ENCODE measurements at regions of chr10 and their contacts with region 1.

Region 1: GRCh38 chr10:119041326-119041725 is 11.8 kb downstream of the NANOS1 start:
- DNase-seq: no peak
- H3K4me3 ChIP-seq: no peak overlapping the region
- H3K27ac ChIP-seq: no peak overlapping the region
- H3K4me1 ChIP-seq: no peaks in the 10 kb centered on the region
- H3K27me3 ChIP-seq: no peaks in the 10 kb centered on the region
- CTCF ChIP-seq: no peak
- POLR2A ChIP-seq: no peak

Region 2: DNA sequence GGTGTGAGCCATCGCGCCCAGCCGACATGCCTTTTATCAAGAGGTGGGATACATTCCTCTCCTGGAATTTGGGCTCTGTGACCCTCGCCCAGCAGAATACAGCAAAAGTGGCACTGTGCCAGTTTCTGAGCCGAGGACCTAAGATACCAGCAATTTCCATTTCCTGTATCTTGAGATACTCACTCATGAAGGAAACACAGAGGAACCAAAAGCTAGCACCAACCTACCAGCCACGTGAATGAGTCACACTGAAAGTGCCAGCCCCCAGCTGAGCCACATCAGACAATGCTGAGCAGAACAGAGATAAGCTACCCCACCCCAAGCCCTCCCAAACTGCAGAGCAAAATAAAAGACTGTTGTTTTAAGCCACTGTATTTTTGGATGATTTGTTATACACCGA is 342.9 kb before region 1 on chr10:
- intact Hi-C with region 1: no loop called
- DNase-seq: no peak
- H3K4me3 ChIP-seq: no peak overlapping the region
- H3K27ac ChIP-seq: no peak overlapping the region
- H3K4me1 ChIP-seq: peaks cover 0 to 8% (median under 1%) of the 10 kb centered on the region in 3 donors
- H3K27me3 ChIP-seq: no peaks in the 10 kb centered on the region
- CTCF ChIP-seq: no peak
- POLR2A ChIP-seq: no peak

Region 3: GRCh38 chr10:119178372-119179119 is 137.2 kb after region 1 on chr10 and contains the start of gene PRDX3:
- intact Hi-C with region 1: loop called (anchors 10 kb)
- DNase-seq: peak; percentile 27
- H3K4me3 ChIP-seq: peak within 1 kb of the TSS; percentile 64 to 89 (median 72)
- H3K27ac ChIP-seq: peak within 1 kb of the TSS; percentile 89 to 96 (median 90)
- H3K4me1 ChIP-seq: peaks cover 0 to 42% (median 15%) of the 10 kb centered on the region in 3 donors
- H3K27me3 ChIP-seq: no peaks in the 10 kb centered on the region
- CTCF ChIP-seq: peak in 2 of 6 experiments; percentile 20 to 21
- POLR2A ChIP-seq: peak in 1 of 4 donors; percentile 79
- total RNA-seq, gene PRDX3: 42.9 to 183 (median 119) TPM